Mammary epithelial cell (primary cell): ENCODE measurements at regions of chr11 and their contacts with region 1.

Region 1: DNA sequence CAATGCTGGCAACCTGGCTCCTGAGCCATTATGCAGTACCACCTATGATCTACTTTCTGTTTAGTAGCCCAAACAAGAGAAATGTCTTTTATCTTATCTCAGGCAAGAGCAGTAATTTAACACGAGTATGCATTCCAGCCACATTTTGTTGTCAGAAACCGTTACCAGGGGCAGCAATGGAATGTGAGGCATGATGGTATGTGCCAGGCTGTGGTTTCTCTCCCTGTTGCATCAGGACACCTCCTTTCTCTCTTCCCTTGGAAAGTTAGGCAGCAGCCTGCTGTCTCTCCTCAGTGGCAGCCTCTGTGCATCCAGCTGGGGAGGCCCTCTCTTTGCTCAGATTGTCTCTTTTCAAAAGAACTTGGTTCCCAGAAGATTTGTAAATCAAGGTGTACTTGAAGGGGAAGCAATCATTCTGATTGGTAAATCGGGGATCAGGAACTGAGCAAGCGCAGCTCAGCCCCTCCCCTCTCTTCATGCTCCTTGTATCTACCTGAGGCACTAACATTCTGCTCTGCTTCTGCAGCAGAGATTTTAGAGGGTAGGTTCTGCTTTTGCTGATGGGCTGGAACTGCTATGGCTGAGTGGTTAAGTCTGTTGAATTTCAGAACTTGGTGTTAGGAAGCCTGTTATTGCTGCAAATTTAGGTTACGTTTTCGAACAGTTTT is 229.2 kb downstream of the ADAMTS15 start:
- DNase-seq: peak; percentile 83
- H3K4me3 ChIP-seq: peak overlapping the region in 1 of 3 experiments; percentile 9
- H3K27ac ChIP-seq: peak overlapping the region; percentile 75
- H3K4me1 ChIP-seq: peaks cover 29% of the 10 kb centered on the region
- H3K27me3 ChIP-seq: no peaks in the 10 kb centered on the region
- CTCF ChIP-seq: no peak

Region 2: GRCh38 chr11:130473098-130473794 is 204.4 kb before region 1 on chr11:
- CTCF ChIA-PET with region 1: no interaction called
- dilution Hi-C with region 1: no loop called
- in situ Hi-C with region 1: no loop called
- intact Hi-C with region 1: no loop called
- DNase-seq: no peak
- H3K4me3 ChIP-seq: no peak overlapping the region
- H3K27ac ChIP-seq: no peak overlapping the region
- H3K4me1 ChIP-seq: peaks cover 4% of the 10 kb centered on the region
- H3K27me3 ChIP-seq: no peaks in the 10 kb centered on the region
- CTCF ChIP-seq: no peak

Region 3: GRCh38 chr11:130827451-130828377 is 150.1 kb after region 1 on chr11:
- CTCF ChIA-PET with region 1: no interaction called
- dilution Hi-C with region 1: no loop called
- in situ Hi-C with region 1: no loop called
- intact Hi-C with region 1: loop called (anchors 5 kb)
- DNase-seq: peak; percentile 73
- H3K4me3 ChIP-seq: no peak overlapping the region
- H3K27ac ChIP-seq: no peak overlapping the region
- H3K4me1 ChIP-seq: no peaks in the 10 kb centered on the region
- H3K27me3 ChIP-seq: no peaks in the 10 kb centered on the region
- CTCF ChIP-seq: peak; percentile 65 to 80